Vagina (tissue), 2 donors: ENCODE measurements at regions of chr1 and their contacts with region 1.

Region 1: DNA sequence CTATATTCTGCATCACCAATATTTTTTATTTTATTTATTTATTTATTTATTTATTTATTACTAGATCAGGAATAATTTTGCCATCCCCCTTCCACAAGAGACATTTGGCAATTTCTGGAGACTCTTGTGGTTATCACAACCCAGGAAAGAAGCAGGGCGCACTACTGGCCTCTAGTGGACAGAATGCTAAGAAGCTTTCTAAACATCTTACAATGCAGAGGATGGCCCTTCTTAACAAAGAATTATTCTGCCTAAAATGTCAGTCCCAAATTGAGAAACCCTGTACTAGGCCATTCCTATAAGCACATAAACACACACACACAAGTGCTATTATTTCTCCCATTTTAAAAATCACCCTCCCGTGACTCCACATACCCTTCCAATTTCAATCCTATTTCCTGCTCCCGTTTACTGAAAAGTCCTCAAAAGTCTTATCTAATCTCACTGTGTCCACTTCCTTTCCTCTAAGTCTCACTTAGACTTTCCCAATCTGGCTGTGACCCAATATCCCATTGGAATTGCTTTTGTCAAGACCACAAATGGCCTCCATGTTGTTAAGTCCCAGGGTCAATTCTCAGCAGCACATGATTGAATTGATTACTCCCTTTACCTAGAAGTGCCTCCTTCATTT is 43.7 kb upstream of the RNF11 start:
- DNase-seq: no peak
- H3K4me3 ChIP-seq: no peak overlapping the region
- H3K27ac ChIP-seq: no peak overlapping the region
- H3K4me1 ChIP-seq: no peaks in the 10 kb centered on the region
- H3K27me3 ChIP-seq: no peaks in the 10 kb centered on the region
- CTCF ChIP-seq: peak; percentile 41 to 63 (median 42)
- POLR2A ChIP-seq: no peak

Region 2: DNA sequence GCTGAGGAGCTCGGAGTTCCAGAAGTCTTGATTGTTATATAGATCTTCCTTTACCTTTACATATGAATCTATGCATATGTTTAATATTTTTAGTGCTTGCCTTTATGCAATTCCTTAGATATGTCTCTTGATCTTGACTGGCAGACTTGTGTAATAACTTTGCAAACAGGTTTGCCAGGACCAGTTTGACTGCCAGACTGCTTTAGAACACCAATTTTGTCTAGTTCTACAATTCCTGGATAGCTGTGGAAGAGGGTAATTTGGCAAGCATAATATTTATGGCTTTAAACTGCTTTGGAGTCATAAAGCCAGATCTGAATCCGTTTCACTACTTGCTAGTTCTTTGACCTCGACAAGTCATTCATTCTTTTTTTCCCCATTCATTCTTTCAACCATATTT is 482.2 kb before region 1 on chr1:
- intact Hi-C with region 1: no loop called
- DNase-seq: no peak
- H3K4me3 ChIP-seq: no peak overlapping the region
- H3K27ac ChIP-seq: no peak overlapping the region
- H3K4me1 ChIP-seq: peaks cover 11% of the 10 kb centered on the region
- H3K27me3 ChIP-seq: no peaks in the 10 kb centered on the region
- CTCF ChIP-seq: no peak
- POLR2A ChIP-seq: no peak

Region 3: GRCh38 chr1:50929376-50929958 is 262.9 kb before region 1 on chr1:
- intact Hi-C with region 1: loop called (anchors 10 kb)
- DNase-seq: no peak
- H3K4me3 ChIP-seq: no peak overlapping the region
- H3K27ac ChIP-seq: no peak overlapping the region
- H3K4me1 ChIP-seq: peaks cover 8% of the 10 kb centered on the region
- H3K27me3 ChIP-seq: no peaks in the 10 kb centered on the region
- CTCF ChIP-seq: peak; percentile 29 to 43 (median 39)
- POLR2A ChIP-seq: no peak